Endothelial cell of umbilical vein (primary cell): ENCODE measurements at regions of chr4 and their contacts with region 1.

Region 1: GRCh38 chr4:111641955-111642579 is 503.2 kb upstream of the FAM241A start:
- DNase-seq: peak; percentile 86
- H3K4me3 ChIP-seq: no peak overlapping the region
- H3K27ac ChIP-seq: no peak overlapping the region
- H3K4me1 ChIP-seq: peaks cover 3% of the 10 kb centered on the region
- H3K27me3 ChIP-seq: no peaks in the 10 kb centered on the region
- CTCF ChIP-seq: peak; percentile 80 to 89
- POLR2A ChIP-seq: no peak

Region 2: DNA sequence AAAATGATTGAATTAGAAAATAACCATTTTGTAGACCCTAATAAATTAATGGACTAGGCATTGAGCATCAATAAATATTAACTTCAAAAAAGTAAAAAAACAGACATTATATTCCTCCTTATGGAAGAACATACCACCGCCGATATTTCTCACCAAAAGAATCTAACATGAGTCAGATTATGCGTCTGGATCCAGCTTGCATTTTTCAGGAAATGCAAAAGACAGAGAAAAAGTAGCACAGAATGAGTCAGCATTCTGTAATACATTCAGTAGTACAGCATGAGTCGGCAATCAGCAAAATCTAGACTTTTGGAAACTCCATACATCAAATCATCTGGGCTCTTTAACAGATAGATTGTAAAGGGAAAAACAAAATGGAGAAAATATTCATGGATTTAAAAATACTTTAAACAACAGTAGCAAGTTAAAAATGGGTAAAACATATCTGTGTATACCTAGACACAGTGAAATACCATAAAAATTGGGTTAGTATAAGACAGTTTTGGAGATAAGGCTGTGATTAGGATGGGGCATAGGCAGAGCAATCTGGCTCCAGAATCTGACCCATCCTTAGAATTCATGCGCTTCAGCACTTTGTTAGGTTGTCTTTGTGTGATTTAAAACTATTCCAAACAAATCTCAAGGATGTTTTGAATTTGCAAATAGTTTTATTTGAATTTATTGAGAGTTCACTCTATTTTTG is 129.8 kb before region 1 on chr4:
- CTCF ChIA-PET with region 1: no interaction called
- POLR2A ChIA-PET with region 1: no interaction called
- dilution Hi-C with region 1: no loop called
- intact Hi-C with region 1: no loop called
- DNase-seq: peak; percentile 76
- H3K4me3 ChIP-seq: no peak overlapping the region
- H3K27ac ChIP-seq: peak overlapping the region; percentile 92
- H3K4me1 ChIP-seq: peaks cover 9% of the 10 kb centered on the region
- H3K27me3 ChIP-seq: no peaks in the 10 kb centered on the region
- CTCF ChIP-seq: no peak
- POLR2A ChIP-seq: no peak

Region 3: GRCh38 chr4:111707491-111707890 is 65.4 kb after region 1 on chr4:
- CTCF ChIA-PET with region 1: no interaction called
- POLR2A ChIA-PET with region 1: no interaction called
- dilution Hi-C with region 1: no loop called
- intact Hi-C with region 1: no loop called
- DNase-seq: no peak
- H3K4me3 ChIP-seq: no peak overlapping the region
- H3K27ac ChIP-seq: no peak overlapping the region
- H3K4me1 ChIP-seq: no peaks in the 10 kb centered on the region
- H3K27me3 ChIP-seq: peaks cover 0 to 8% of the 10 kb centered on the region in 2 experiments
- CTCF ChIP-seq: no peak
- POLR2A ChIP-seq: no peak

Region 4: GRCh38 chr4:111778543-111778942 is 136.5 kb after region 1 on chr4:
- CTCF ChIA-PET with region 1: interaction called, 4 read pairs
- POLR2A ChIA-PET with region 1: no interaction called
- dilution Hi-C with region 1: no loop called
- intact Hi-C with region 1: loop called (anchors 1 kb)
- DNase-seq: no peak
- H3K4me3 ChIP-seq: no peak overlapping the region
- H3K27ac ChIP-seq: no peak overlapping the region
- H3K4me1 ChIP-seq: no peaks in the 10 kb centered on the region
- H3K27me3 ChIP-seq: peaks cover 0 to 5% of the 10 kb centered on the region in 2 experiments
- CTCF ChIP-seq: no peak
- POLR2A ChIP-seq: no peak

Region 5: DNA sequence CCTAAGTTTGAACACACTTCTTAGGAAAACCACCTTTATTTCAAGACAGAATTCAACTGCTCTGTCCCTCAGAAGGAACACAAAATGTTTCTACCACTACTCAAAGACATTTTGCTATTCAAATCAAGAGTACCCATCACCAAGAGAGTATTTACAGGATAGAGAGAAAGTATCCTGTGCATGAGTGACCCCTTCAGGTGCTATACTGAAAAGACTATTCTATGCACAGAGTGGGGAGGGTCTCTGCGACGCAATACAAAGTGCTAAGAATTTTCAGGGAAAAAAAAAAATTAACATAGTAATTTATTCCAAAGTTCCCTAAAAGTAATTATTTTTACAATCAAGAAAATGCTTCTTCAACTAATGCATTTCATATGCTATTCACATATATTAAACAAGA is 156.8 kb after region 1 on chr4:
- CTCF ChIA-PET with region 1: no interaction called
- POLR2A ChIA-PET with region 1: no interaction called
- dilution Hi-C with region 1: no loop called
- intact Hi-C with region 1: loop called (anchors 2 kb)
- DNase-seq: no peak
- H3K4me3 ChIP-seq: no peak overlapping the region
- H3K27ac ChIP-seq: no peak overlapping the region
- H3K4me1 ChIP-seq: no peaks in the 10 kb centered on the region
- H3K27me3 ChIP-seq: no peaks in the 10 kb centered on the region
- CTCF ChIP-seq: no peak
- POLR2A ChIP-seq: no peak

Region 6: DNA sequence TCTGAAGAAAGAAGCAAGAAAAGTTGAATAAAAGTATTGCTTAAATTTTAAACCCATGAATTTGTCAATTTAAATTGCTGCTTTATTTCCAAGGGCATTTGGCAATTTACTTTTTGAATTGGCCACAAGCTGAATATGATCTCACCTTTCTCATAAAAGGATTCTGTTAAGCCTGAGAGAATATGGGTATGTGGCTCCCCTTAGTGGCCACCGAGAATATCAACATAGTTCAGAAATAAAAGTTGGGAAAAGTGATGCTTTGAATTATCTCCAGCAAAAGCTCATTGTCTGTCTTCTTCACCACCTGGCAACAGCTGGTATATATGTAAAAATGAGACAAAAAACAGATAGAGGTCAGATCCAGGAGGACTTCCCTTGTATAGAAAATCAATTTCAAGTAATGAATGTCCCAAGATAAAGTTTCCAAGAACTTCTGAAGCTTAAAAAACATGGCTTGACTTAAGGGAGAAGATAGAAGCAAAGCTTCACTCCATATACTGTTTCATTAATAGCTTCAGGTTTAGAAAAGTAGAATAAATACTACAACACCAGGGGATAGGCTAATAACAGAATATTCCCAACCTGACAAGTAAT is 212.5 kb after region 1 on chr4:
- CTCF ChIA-PET with region 1: interaction called, 46 read pairs
- POLR2A ChIA-PET with region 1: no interaction called
- dilution Hi-C with region 1: no loop called
- intact Hi-C with region 1: loop called (anchors 1 kb)
- DNase-seq: peak; percentile 39
- H3K4me3 ChIP-seq: no peak overlapping the region
- H3K27ac ChIP-seq: no peak overlapping the region
- H3K4me1 ChIP-seq: no peaks in the 10 kb centered on the region
- H3K27me3 ChIP-seq: peaks cover 0 to 8% of the 10 kb centered on the region in 2 experiments
- CTCF ChIP-seq: peak; percentile 34 to 49
- POLR2A ChIP-seq: no peak

Region 7: GRCh38 chr4:111937368-111937767 is 295.3 kb after region 1 on chr4:
- CTCF ChIA-PET with region 1: interaction called, 6 read pairs
- POLR2A ChIA-PET with region 1: no interaction called
- dilution Hi-C with region 1: no loop called
- intact Hi-C with region 1: loop called (anchors 2 kb)
- DNase-seq: peak; percentile 10
- H3K4me3 ChIP-seq: no peak overlapping the region
- H3K27ac ChIP-seq: no peak overlapping the region
- H3K4me1 ChIP-seq: no peaks in the 10 kb centered on the region
- H3K27me3 ChIP-seq: peaks cover 7 to 12% of the 10 kb centered on the region in 2 experiments
- CTCF ChIP-seq: no peak
- POLR2A ChIP-seq: no peak

Region 8: GRCh38 chr4:112060212-112060611 is 418.1 kb after region 1 on chr4:
- CTCF ChIA-PET with region 1: interaction called, 11 read pairs
- POLR2A ChIA-PET with region 1: no interaction called
- dilution Hi-C with region 1: no loop called
- intact Hi-C with region 1: loop called (anchors 1 kb)
- DNase-seq: peak; percentile 59
- H3K4me3 ChIP-seq: no peak overlapping the region
- H3K27ac ChIP-seq: no peak overlapping the region
- H3K4me1 ChIP-seq: peaks cover 9% of the 10 kb centered on the region
- H3K27me3 ChIP-seq: no peaks in the 10 kb centered on the region
- CTCF ChIP-seq: peak; percentile 45 to 58
- POLR2A ChIP-seq: no peak